Activated naive CD4-positive, alpha-beta T cell treated with anti-CD3 and anti-CD28 coated beads for 36 hours (primary cell): ENCODE measurements at regions of chr19 and their contacts with region 1.

Region 1: DNA sequence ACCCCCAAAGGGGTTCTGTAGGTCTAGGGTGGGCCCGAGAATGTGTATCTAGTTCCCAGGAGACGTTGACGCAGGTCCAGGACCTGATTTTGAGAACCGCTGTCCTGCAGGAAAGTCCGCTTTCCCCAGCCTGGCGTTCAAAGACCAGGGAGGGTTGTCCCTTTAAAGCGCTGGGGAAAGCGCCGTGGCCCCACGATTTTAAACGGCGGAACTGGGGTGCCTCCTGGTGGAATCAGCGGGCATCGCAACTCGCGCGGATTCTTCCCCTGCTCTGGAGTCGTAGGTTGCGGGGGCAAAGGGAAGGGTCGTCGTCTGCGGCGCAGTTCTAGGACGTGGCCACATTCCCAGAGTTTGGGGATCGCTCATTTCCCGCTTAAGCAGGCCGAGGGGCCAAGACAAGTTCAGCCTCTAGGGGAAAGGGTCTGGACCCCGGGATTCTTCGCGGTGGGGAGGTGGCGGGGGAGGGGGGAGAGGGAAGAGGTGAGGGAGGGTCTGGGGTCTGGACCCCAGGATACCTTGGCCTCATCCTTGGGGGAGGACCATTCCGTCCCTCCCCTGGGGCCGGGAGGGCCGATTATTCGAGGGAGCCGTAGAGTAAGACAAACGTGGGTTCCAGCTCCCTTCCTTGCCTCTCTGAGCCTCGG is 7.7 kb downstream of the PNMA8B start:
- DNase-seq: peak; percentile 82
- H3K4me3 Mint-ChIP-seq: no peak overlapping the region
- H3K27ac Mint-ChIP-seq: no peak overlapping the region
- H3K4me1 Mint-ChIP-seq: peaks cover 28% of the 10 kb centered on the region
- H3K27me3 Mint-ChIP-seq: peaks cover 54% of the 10 kb centered on the region

Region 2: GRCh38 chr19:46221981-46222610 is 265.8 kb before region 1 on chr19:
- CTCF ChIA-PET with region 1: no interaction called
- intact Hi-C with region 1: no loop called
- DNase-seq: no peak
- H3K4me3 Mint-ChIP-seq: no peak overlapping the region
- H3K27ac Mint-ChIP-seq: no peak overlapping the region
- H3K4me1 Mint-ChIP-seq: no peaks in the 10 kb centered on the region
- H3K27me3 Mint-ChIP-seq: peaks cover 22% of the 10 kb centered on the region

Region 3: GRCh38 chr19:46283771-46284170 is 204.2 kb before region 1 on chr19:
- CTCF ChIA-PET with region 1: interaction called, 3 read pairs
- intact Hi-C with region 1: loop called (anchors 2 kb)
- DNase-seq: no peak
- H3K4me3 Mint-ChIP-seq: no peak overlapping the region
- H3K27ac Mint-ChIP-seq: no peak overlapping the region
- H3K4me1 Mint-ChIP-seq: no peaks in the 10 kb centered on the region
- H3K27me3 Mint-ChIP-seq: peaks cover 5% of the 10 kb centered on the region

Region 4: DNA sequence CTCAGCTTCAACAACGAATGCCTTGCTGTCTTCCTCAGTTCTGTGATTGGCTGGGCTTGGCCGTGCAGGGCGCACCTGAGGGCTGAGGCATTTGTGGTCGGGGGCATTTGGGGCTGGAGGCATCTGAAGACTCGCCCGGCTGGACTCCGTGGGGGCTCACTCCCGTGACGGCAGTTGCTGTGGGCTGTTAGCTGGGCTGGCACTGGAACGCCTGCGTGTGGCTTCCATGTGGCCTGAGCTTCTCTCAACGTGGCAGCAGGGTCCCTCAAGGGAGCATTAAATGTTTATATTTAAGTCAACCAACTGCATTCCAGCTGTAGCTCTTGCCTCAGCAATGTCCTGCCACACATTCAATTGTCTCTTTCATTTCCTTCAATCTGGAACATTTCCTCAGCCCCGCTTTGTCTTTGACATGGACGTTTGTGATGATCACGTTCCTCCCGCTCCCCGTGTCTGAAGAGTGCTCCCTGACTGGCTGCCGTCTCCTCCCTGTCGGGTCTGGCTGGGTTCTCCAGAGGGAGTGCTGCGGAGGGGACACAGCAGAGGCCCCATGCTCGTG is 95.6 kb before region 1 on chr19:
- CTCF ChIA-PET with region 1: interaction called, 18 read pairs
- intact Hi-C with region 1: loop called (anchors 1 kb)
- DNase-seq: no peak
- H3K4me3 Mint-ChIP-seq: no peak overlapping the region
- H3K27ac Mint-ChIP-seq: no peak overlapping the region
- H3K4me1 Mint-ChIP-seq: peaks cover 1% of the 10 kb centered on the region
- H3K27me3 Mint-ChIP-seq: no peaks in the 10 kb centered on the region

Region 5: DNA sequence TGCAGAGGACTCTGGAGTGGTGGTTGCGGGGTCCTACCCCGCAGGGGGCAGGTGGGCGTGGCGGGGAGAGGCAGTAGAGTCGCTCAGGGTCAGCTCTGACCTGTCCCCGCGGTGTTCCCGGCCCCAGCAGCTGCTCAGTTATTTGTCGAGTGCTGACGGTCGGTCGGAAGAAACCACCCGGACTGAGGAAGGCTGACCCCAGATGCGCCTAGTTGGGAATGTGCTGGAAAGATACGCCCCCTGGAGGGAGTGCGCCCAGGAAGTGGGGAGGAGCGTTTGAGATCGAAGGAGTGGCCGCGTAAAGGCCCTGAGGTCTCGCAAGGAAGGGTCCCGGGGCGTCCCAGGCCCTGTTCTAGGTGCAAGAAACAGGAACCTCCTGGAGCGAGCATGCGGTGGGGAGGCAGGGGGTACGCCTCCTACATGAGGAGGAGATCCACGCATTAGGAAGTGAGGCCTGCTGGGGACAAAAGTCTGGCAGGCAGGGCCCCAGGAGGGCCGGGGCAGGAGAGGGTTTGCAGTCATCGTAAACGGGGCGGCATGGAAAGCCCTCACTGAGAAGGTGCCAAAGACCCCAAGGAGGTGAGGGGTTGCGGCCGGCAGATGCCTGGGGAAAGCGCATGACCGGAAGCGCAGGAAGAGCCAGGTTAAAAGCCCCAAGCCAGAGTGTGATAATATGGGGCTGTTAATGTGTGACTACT is 83.7 kb before region 1 on chr19:
- CTCF ChIA-PET with region 1: interaction called, 23 read pairs
- intact Hi-C with region 1: loop called (anchors 1 kb)
- DNase-seq: no peak
- H3K4me3 Mint-ChIP-seq: peak overlapping the region; percentile 54
- H3K27ac Mint-ChIP-seq: no peak overlapping the region
- H3K4me1 Mint-ChIP-seq: peaks cover 17% of the 10 kb centered on the region
- H3K27me3 Mint-ChIP-seq: peaks cover 63% of the 10 kb centered on the region

Region 6: DNA sequence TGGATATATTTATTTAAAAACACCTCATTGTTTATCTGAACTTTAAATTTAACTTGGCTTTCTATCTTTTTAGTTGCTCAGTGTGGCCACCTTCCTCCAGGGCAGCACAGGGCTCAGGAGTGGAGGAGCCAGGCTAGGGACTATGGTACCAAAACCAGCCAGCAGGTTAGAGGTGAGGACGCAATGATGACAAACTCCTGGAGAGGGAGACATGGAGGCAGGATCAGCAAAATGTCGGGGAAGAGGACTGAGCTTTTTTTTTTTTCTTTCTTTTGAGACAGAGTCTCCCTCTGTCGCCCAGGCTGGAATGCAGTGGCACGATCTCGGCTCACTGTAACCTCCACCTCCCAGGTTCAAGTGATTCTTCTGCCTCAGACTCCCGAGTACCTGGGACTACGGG is 83.6 kb after region 1 on chr19:
- CTCF ChIA-PET with region 1: no interaction called
- intact Hi-C with region 1: no loop called
- DNase-seq: peak; percentile 53
- H3K4me3 Mint-ChIP-seq: no peak overlapping the region
- H3K27ac Mint-ChIP-seq: no peak overlapping the region
- H3K4me1 Mint-ChIP-seq: peaks cover 14% of the 10 kb centered on the region
- H3K27me3 Mint-ChIP-seq: no peaks in the 10 kb centered on the region